Activated CD8-positive, alpha-beta T cell treated with anti-CD3 and anti-CD28 coated beads for 36 hours (primary cell): ENCODE measurements at regions of chr1 and their contacts with region 1.

Region 1: DNA sequence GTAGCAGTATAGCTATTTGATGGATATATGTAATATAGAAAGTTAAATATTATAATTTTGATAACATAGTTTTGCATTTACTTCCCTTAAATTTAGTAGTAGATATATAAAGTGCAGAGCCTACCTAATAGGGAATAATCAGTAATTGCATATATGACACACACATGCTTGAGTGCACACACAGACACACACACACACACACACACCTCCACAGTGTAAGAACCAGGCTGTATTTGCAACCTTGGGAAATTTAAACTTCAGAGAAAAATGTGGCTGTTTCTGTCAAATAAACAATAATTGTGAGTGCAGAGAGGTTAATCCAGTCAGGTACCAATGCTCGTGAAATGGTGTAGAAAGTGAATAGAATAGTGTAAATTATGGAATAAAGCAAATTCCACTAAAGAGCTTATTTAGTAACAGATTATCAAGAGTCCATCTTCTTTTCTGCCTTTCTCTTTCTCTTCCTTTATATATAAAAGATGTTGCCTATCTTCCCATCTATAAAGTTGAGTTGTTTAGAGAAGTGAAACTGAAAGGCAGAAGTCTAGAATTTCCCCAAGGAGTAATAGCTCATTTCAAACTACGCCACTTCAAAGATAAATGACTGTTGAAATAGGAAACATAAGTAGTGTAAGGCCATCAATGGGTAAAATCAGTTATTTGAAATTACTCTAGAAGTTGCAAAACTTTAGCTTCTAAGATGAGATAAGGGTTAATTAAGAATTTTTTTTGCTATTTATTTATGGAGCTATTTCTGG is 273.7 kb downstream of the SRGAP2C start:
- DNase-seq: no peak
- ATAC-seq: peak; percentile 94
- H3K4me3 Mint-ChIP-seq: peak overlapping the region; percentile 37
- H3K27ac Mint-ChIP-seq: peak overlapping the region; percentile 60
- H3K4me1 Mint-ChIP-seq: peaks cover 25% of the 10 kb centered on the region
- H3K27me3 Mint-ChIP-seq: no peaks in the 10 kb centered on the region
- CTCF ChIP-seq: no peak

Region 2: DNA sequence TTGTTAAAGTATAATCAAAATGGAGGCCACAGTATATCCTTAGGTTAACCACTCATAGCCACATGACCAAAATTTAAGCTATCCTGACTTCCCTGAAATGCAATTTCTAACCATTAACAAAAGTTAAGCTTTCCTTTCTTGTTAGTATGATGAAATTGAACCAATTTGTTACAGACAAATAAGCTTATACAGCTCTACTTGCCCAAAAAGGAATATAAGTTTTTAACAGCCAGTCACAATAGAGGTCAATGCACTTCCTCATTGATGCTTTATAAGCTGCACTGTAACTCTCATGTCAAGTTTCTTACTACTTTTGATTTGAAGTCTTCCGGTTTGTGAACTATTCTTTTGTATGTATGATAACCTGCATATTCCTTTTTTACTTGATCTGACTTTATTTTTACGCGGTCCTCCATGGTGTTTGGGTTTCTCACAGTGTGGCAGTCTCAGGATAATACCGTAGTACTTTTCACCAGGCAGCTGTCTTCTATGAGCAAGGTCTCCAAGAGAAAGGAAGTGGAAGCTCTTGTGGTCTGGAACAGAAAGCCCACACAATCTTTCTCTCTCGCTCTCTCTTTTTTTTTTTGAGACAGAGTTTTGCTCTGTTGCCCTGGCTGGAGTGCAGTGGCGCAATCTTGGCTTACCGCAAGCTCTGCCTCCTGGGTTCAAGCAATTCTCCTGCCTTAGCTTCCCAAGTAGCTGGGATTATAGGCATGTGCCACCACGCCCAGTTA is 57.9 kb after region 1 on chr1:
- CTCF ChIA-PET with region 1: interaction called, 3 read pairs
- POLR2A ChIA-PET with region 1: interaction called, 7 read pairs
- intact Hi-C with region 1: loop called (anchors 2 kb)
- DNase-seq: peak; percentile 64
- ATAC-seq: peak; percentile 41
- H3K4me3 Mint-ChIP-seq: peak overlapping the region; percentile 57
- H3K27ac Mint-ChIP-seq: peak overlapping the region; percentile 94
- H3K4me1 Mint-ChIP-seq: peaks cover 60% of the 10 kb centered on the region
- H3K27me3 Mint-ChIP-seq: no peaks in the 10 kb centered on the region
- CTCF ChIP-seq: no peak